IMR-90 (cell line): ENCODE measurements at regions of chr11 and their contacts with region 1.

Region 1: DNA sequence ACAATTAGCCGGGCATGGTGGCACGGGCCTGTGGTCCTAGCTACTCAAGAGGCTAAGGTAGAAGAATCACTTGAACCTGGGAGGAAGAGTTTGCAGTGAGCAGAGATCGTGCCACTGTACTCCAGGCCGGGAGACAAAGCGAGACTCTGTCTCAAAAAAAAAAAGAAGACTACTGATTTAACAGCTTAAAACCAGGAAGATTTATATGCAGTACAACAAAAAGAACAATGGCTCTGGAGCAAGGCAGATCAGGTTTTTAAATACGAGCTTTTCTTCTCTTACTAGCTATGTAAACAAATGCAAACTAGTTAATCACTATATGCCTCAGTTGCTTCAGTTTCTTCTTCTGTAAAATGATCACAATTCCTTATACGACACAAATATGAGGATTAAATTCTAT is 6.9 kb downstream of the FAM168A start:
- DNase-seq: no peak
- ATAC-seq: no peak
- H3K4me3 ChIP-seq: no peak overlapping the region
- H3K27ac ChIP-seq: no peak overlapping the region
- H3K4me1 ChIP-seq: no peaks in the 10 kb centered on the region; the same call in 1 of the 2 replicates
- H3K27me3 ChIP-seq: no peaks in the 10 kb centered on the region
- CTCF ChIP-seq: no peak
- POLR2A ChIP-seq: no peak
- RAD21 ChIP-seq: no peak

Region 2: DNA sequence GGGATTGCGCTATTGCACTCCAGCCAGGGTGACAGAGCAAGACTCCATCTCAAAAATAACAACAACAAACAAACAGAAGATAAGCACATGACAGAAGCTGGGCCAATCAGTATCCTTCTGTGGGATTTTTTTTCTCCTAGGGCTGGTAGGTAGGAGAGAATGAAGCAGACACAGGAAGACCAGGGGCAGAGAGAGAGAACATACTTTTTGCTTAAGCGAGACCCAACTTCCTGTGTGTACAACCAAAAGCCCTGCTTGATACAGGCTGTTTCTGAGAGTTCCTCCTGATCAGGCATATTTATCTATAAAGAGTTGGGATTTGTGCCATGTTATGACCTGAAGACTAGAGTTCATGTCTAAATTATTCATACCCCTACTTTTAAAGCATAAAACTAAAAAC is 43.0 kb after region 1 on chr11:
- CTCF ChIA-PET with region 1: interaction called, 11 read pairs
- POLR2A ChIA-PET with region 1: no interaction called
- dilution Hi-C with region 1: no loop called
- in situ Hi-C with region 1: no loop called
- intact Hi-C with region 1: no loop called
- DNase-seq: no peak
- ATAC-seq: no peak
- H3K4me3 ChIP-seq: no peak overlapping the region
- H3K27ac ChIP-seq: no peak overlapping the region
- H3K4me1 ChIP-seq: no peaks in the 10 kb centered on the region
- H3K27me3 ChIP-seq: peaks cover 16% of the 10 kb centered on the region
- CTCF ChIP-seq: no peak
- POLR2A ChIP-seq: no peak
- RAD21 ChIP-seq: no peak